GM12878 (cell line): ENCODE measurements at regions of chr10 and their contacts with region 1.

Region 1: DNA sequence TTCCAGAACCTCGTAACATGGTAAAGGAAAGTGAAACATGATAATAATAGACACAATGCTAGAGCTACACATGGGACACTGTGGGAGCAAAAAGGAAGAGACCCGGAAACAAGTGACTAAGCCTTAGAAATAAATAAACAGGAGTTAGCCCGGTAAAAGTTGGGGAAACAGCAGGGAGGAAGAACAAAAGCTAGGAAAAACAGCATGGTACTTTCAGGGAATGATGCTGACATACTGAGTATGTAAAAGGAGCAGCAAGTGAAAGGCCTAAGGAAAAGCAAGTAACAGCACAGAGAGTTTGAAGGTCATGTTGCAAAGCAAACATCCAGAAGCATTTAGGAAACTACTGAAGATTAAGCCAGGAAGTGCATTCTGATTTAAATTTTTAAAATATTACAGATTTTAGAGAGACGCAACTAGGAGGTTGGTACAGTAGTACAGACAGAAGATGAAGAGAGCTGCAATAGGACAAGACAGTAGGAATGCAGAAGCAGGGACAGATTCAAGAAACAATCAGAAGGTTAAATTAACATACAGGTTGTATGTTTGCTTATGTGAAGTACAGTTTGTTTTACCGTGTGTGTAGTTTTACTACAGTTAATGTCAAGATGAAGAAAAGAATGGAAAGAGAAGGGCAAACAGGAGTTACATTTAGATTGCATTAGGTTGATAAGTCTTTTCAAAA is 63.7 kb downstream of the ARHGAP12 start:
- DNase-seq: no peak
- ATAC-seq: no peak
- H3K4me3 ChIP-seq: no peak overlapping the region
- H3K27ac ChIP-seq: no peak overlapping the region
- H3K4me1 ChIP-seq: peaks cover 4% of the 10 kb centered on the region; the same call in 1 of the 2 replicates
- H3K27me3 ChIP-seq: no peaks in the 10 kb centered on the region
- CTCF ChIP-seq: no peak
- EP300 ChIP-seq: no peak
- POLR2A ChIP-seq: no peak
- RAD21 ChIP-seq: no peak

Region 2: GRCh38 chr10:31847515-31847914 is 17.5 kb before region 1 on chr10:
- CTCF ChIA-PET with region 1: interaction called, 18 read pairs
- POLR2A ChIA-PET with region 1: interaction called, 8 read pairs
- RAD21 ChIA-PET with region 1: interaction called, 7 read pairs
- SMC1A ChIA-PET with region 1: interaction called, 14 read pairs
- in situ Hi-C with region 1: no loop called
- intact Hi-C with region 1: no loop called
- DNase-seq: no peak
- ATAC-seq: no peak
- H3K4me3 ChIP-seq: no peak overlapping the region
- H3K27ac ChIP-seq: no peak overlapping the region
- H3K4me1 ChIP-seq: no peaks in the 10 kb centered on the region
- H3K27me3 ChIP-seq: no peaks in the 10 kb centered on the region
- CTCF ChIP-seq: no peak
- EP300 ChIP-seq: no peak
- POLR2A ChIP-seq: no peak
- RAD21 ChIP-seq: no peak

Region 3: DNA sequence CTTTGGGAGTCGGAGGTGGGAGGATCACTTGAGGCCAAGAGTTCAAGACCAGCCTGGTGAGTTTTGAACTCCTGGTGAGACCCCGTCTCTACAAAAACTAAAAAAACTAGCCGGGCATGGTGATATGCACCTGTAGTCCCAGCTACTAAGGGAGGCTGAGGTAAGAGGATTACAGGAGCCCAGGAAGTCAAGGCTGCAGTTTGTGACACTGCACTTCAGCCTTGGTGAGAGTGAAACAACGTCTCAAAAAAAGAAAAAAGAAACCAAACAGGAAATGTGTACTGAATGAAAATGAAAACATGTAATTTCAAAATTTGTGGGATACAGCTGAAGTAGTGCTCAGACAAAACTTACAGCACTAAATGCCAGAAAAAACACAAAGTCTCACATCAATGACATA is 56.1 kb after region 1 on chr10:
- CTCF ChIA-PET with region 1: interaction called, 6 read pairs
- POLR2A ChIA-PET with region 1: no interaction called
- RAD21 ChIA-PET with region 1: interaction called, 10 read pairs
- SMC1A ChIA-PET with region 1: interaction called, 9 read pairs
- in situ Hi-C with region 1: no loop called
- intact Hi-C with region 1: no loop called
- DNase-seq: peak; percentile 51
- ATAC-seq: peak; percentile 72
- H3K4me3 ChIP-seq: peak overlapping the region; percentile 17
- H3K27ac ChIP-seq: peak overlapping the region; percentile 58
- H3K4me1 ChIP-seq: peaks cover 38% of the 10 kb centered on the region
- H3K27me3 ChIP-seq: no peaks in the 10 kb centered on the region
- CTCF ChIP-seq: no peak
- EP300 ChIP-seq: no peak
- POLR2A ChIP-seq: no peak
- RAD21 ChIP-seq: no peak

Region 4: DNA sequence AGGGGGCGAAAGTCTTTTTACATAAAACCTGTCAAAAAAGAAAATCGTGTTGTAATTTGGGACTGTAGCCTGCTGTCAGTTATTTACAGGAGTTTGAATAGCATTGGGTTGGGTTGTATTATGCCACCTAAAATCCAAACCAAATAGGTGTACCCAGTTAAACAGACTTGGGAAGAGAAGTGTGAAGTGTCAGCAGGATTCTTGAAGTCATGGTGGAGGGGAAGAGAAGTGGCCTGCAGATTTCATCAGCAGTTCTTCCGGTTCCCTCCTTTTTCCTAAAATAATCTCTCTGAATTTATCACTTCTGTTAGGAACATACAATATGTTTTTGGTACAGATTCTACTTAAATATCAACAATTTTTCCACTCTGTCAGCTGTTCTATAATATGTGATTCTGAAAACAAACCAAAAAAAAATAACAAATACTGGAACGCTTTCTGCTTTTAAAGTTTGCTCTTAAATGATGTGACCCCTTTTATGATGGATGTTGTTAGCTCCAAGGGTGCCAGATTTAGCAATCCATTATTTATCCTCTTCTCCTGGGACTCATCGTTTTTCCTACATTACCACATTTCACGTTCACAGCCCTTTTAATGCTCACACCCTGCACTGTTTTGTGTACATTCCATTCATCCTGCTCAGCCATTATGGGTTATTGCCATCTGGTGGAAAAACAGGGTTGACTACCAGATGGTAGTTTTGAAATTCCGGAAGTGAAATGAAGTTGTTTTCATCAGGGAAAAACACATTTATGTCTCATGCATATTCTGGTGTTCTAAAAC is 82.4 kb after region 1 on chr10:
- CTCF ChIA-PET with region 1: interaction called, 54 read pairs
- POLR2A ChIA-PET with region 1: interaction called, 3 read pairs
- RAD21 ChIA-PET with region 1: interaction called, 34 read pairs
- SMC1A ChIA-PET with region 1: interaction called, 60 read pairs
- in situ Hi-C with region 1: no loop called
- intact Hi-C with region 1: loop called (anchors 5 kb)
- DNase-seq: no peak
- ATAC-seq: peak; percentile 61
- H3K4me3 ChIP-seq: no peak overlapping the region
- H3K27ac ChIP-seq: no peak overlapping the region
- H3K4me1 ChIP-seq: no peaks in the 10 kb centered on the region
- H3K27me3 ChIP-seq: no peaks in the 10 kb centered on the region
- CTCF ChIP-seq: peak in 1 of 3 experiments; percentile 44; a peak in 3 of 6 replicates
- EP300 ChIP-seq: no peak
- POLR2A ChIP-seq: no peak
- RAD21 ChIP-seq: peak; percentile 36; the same call in 1 of the 2 replicates

Region 5: DNA sequence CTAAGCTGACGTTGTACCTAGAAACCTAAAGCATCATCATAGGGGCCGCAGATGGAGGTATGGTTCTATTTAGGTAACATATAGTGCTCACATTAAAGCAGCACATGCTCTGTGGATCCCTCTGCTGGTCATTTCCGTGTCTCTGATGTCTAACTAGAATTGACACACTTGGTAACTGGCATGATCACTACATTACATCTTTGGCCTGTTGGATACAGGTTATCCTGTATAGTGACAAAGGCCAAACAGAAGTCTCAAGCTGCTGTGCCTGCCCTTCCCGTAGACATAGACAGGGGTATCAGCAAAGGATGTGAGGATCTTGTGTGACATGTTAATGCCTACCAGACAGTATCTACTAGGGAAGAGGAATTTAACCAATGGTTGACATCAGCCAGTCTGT is 140.1 kb after region 1 on chr10:
- CTCF ChIA-PET with region 1: interaction called, 112 read pairs
- POLR2A ChIA-PET with region 1: interaction called, 12 read pairs
- RAD21 ChIA-PET with region 1: interaction called, 61 read pairs
- SMC1A ChIA-PET with region 1: interaction called, 54 read pairs
- in situ Hi-C with region 1: loop called (anchors 5 kb)
- intact Hi-C with region 1: loop called (anchors 1 kb)
- DNase-seq: peak; percentile 16
- ATAC-seq: peak; percentile 90
- H3K4me3 ChIP-seq: no peak overlapping the region
- H3K27ac ChIP-seq: no peak overlapping the region
- H3K4me1 ChIP-seq: no peaks in the 10 kb centered on the region
- H3K27me3 ChIP-seq: no peaks in the 10 kb centered on the region
- CTCF ChIP-seq: peak; percentile 63 to 65 (median 63)
- EP300 ChIP-seq: no peak
- POLR2A ChIP-seq: no peak; the same call in none of the 2 replicates
- RAD21 ChIP-seq: peak; percentile 61

Region 6: GRCh38 chr10:32041290-32042028 is 176.5 kb after region 1 on chr10:
- CTCF ChIA-PET with region 1: interaction called, 4 read pairs
- POLR2A ChIA-PET with region 1: no interaction called
- RAD21 ChIA-PET with region 1: interaction called, 11 read pairs
- SMC1A ChIA-PET with region 1: interaction called, 5 read pairs
- in situ Hi-C with region 1: no loop called
- intact Hi-C with region 1: no loop called
- DNase-seq: no peak
- ATAC-seq: peak; percentile 79
- H3K4me3 ChIP-seq: no peak overlapping the region
- H3K27ac ChIP-seq: no peak overlapping the region
- H3K4me1 ChIP-seq: no peaks in the 10 kb centered on the region
- H3K27me3 ChIP-seq: no peaks in the 10 kb centered on the region
- CTCF ChIP-seq: no peak
- EP300 ChIP-seq: no peak
- POLR2A ChIP-seq: no peak
- RAD21 ChIP-seq: no peak

Region 7: DNA sequence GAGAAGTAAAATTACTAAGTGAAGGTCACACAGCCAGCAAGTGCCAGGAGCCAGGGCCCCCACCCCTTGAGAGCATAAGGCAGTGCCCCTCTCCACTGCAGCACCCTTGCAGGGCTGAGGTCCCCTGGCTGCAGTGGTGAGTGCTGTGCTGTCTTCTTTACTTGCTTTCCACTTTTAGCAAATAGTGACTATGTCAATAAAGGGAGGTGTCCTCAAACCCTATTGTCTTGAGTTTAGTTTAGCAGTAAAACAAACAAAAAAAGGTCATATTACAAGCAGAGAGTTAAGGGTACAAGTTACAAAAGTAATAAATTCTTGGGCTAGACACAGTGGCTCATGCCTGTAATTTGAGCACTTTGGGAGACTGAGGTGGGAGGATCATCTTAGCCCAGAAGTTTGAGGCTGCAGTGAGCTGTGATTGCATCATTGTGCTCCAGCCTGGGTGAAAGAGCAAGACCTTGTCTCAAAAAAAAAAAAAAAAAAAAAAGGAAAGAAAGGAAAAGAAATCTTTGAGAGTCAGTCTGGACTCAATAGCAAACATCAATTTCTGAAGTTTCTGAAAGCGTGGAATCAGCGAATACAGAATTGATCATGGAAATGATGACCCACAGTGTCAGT is 230.2 kb after region 1 on chr10:
- CTCF ChIA-PET with region 1: no interaction called
- POLR2A ChIA-PET with region 1: no interaction called
- RAD21 ChIA-PET with region 1: no interaction called
- SMC1A ChIA-PET with region 1: no interaction called
- in situ Hi-C with region 1: no loop called
- intact Hi-C with region 1: no loop called
- DNase-seq: no peak
- ATAC-seq: no peak
- H3K4me3 ChIP-seq: no peak overlapping the region
- H3K27ac ChIP-seq: no peak overlapping the region
- H3K4me1 ChIP-seq: no peaks in the 10 kb centered on the region
- H3K27me3 ChIP-seq: no peaks in the 10 kb centered on the region
- CTCF ChIP-seq: no peak
- EP300 ChIP-seq: no peak
- POLR2A ChIP-seq: no peak
- RAD21 ChIP-seq: no peak